ENCODE measurements at regions of chr1 and their contacts with region 1.

Region 1: DNA sequence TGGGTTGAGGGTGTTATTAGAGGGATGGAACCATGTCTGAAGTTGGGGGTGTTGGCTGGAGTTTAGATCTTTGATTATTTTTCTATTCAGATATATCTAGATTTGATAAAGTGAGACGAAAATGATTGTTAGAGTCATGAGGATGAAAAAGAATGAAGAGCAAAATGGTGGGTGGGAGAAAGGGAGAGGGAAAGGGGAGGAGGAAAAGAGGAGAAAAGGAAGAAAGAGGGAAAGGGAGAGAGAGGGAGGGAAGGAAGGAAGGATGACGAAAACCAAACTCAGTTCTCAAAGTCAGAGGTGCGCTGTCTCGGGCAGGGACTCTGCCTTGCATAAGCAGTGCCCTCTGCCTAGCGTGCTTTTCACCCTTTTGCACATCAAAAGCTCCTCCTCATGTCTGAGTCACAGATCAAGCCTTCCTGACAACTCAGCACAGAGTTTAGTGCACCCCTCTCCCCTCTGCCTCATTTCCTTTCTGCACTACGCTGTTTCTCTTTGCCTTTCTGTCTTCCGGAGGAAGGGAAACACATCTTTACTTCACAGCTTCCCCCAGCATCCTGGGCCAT is 225.8 kb upstream of the PROX1 start:
- DNase-seq: peak in 8 of 9 donors; percentile 24 to 76 (median 62)
- ATAC-seq: peak; percentile 96
- H3K4me3 ChIP-seq: no peak overlapping the region
- H3K4me3 Mint-ChIP-seq: peak overlapping the region in 9 of 10 donors; percentile 22 to 74 (median 56)
- H3K27ac ChIP-seq: no peak overlapping the region
- H3K27ac Mint-ChIP-seq: peak overlapping the region; percentile 26 to 93 (median 71)
- H3K4me1 ChIP-seq: peaks cover 0 to 12% of the 10 kb centered on the region in 2 donors
- H3K4me1 Mint-ChIP-seq: peaks cover 12 to 35% (median 21%) of the 10 kb centered on the region in 7 donors
- H3K27me3 ChIP-seq: no peaks in the 10 kb centered on the region
- H3K27me3 Mint-ChIP-seq: peaks cover 0 to 5% (median 0%) of the 10 kb centered on the region in 5 donors

Region 2: DNA sequence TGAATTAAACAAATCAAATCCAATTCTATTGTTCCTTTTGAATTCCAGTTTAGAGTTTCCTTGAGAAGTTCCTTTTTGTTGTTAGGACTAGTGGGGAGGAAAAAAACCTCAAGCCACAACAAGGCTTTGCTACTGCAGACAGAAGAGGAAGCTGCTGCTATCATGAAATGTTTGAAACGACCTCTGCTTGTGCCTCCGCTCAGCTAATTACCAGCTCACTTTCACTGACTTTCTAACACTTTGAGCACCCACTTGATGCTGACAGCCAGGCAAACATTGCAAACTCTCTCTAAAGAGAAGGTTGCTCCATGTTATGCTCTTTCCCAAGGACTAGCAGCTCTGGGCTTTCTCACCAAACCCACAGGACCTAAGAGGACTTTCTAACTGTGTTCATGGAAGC is 22.0 kb after region 1 on chr1:
- CTCF ChIA-PET with region 1: no interaction called
- POLR2A ChIA-PET with region 1: no interaction called
- intact Hi-C with region 1: loop called in 1 of 2 experiments (anchors 1 kb)
- DNase-seq: peak in 7 of 9 donors; percentile 24 to 63 (median 52)
- ATAC-seq: peak; percentile 70
- H3K4me3 ChIP-seq: no peak overlapping the region
- H3K4me3 Mint-ChIP-seq: peak overlapping the region in 9 of 10 donors; percentile 39 to 81 (median 70)
- H3K27ac ChIP-seq: no peak overlapping the region
- H3K27ac Mint-ChIP-seq: peak overlapping the region in 6 of 9 donors; percentile 4 to 84 (median 48)
- H3K4me1 ChIP-seq: peaks cover 0 to 20% of the 10 kb centered on the region in 2 donors
- H3K4me1 Mint-ChIP-seq: peaks cover 0 to 42% (median 39%) of the 10 kb centered on the region in 7 donors
- H3K27me3 ChIP-seq: no peaks in the 10 kb centered on the region
- H3K27me3 Mint-ChIP-seq: peaks cover 6 to 17% (median 8%) of the 10 kb centered on the region in 5 donors

Region 3: GRCh38 chr1:213871179-213871578 is 109.3 kb after region 1 on chr1:
- CTCF ChIA-PET with region 1: no interaction called
- POLR2A ChIA-PET with region 1: no interaction called
- intact Hi-C with region 1: loop called in 1 of 2 experiments (anchors 5 kb)
- DNase-seq: peak in 6 of 9 donors; percentile 14 to 44 (median 30)
- ATAC-seq: peak; percentile 22
- H3K4me3 ChIP-seq: no peak overlapping the region
- H3K4me3 Mint-ChIP-seq: peak overlapping the region in 8 of 10 donors; percentile 12 to 72 (median 46)
- H3K27ac ChIP-seq: no peak overlapping the region
- H3K27ac Mint-ChIP-seq: peak overlapping the region in 8 of 9 donors; percentile 4 to 79 (median 32)
- H3K4me1 ChIP-seq: peaks cover 0 to 32% of the 10 kb centered on the region in 2 donors
- H3K4me1 Mint-ChIP-seq: peaks cover 0 to 60% (median 35%) of the 10 kb centered on the region in 7 donors
- H3K27me3 ChIP-seq: no peaks in the 10 kb centered on the region
- H3K27me3 Mint-ChIP-seq: no peaks in the 10 kb centered on the region

Region 4: GRCh38 chr1:215192306-215192705 is 1430.4 kb after region 1 on chr1:
- CTCF ChIA-PET with region 1: no interaction called
- POLR2A ChIA-PET with region 1: no interaction called
- intact Hi-C with region 1: no loop called
- DNase-seq: no peak
- ATAC-seq: no peak
- H3K4me3 ChIP-seq: no peak overlapping the region
- H3K4me3 Mint-ChIP-seq: no peak overlapping the region
- H3K27ac ChIP-seq: no peak overlapping the region
- H3K27ac Mint-ChIP-seq: no peak overlapping the region
- H3K4me1 ChIP-seq: no peaks in the 10 kb centered on the region
- H3K4me1 Mint-ChIP-seq: no peaks in the 10 kb centered on the region
- H3K27me3 ChIP-seq: no peaks in the 10 kb centered on the region
- H3K27me3 Mint-ChIP-seq: peaks cover 0 to 27% (median 7%) of the 10 kb centered on the region in 5 donors

Measured in naive thymus-derived CD4-positive, alpha-beta T cell (primary cell).